ENCODE measurements at regions of chr16 and their contacts with region 1.

Region 1: GRCh38 chr16:70364399-70364798 is 17.7 kb downstream of the DDX19A start:
- DNase-seq: no peak
- H3K4me3 ChIP-seq: no peak overlapping the region
- H3K4me3 Mint-ChIP-seq: no peak overlapping the region
- H3K27ac Mint-ChIP-seq: no peak overlapping the region
- H3K4me1 ChIP-seq: no peaks in the 10 kb centered on the region
- H3K4me1 Mint-ChIP-seq: no peaks in the 10 kb centered on the region
- H3K27me3 ChIP-seq: no peaks in the 10 kb centered on the region
- H3K27me3 Mint-ChIP-seq: no peaks in the 10 kb centered on the region
- CTCF ChIP-seq: no peak

Region 2: GRCh38 chr16:70257391-70257790 is 107.0 kb before region 1 on chr16:
- CTCF ChIA-PET with region 1: no interaction called
- POLR2A ChIA-PET with region 1: no interaction called
- intact Hi-C with region 1: no loop called
- DNase-seq: no peak
- H3K4me3 ChIP-seq: no peak overlapping the region
- H3K4me3 Mint-ChIP-seq: no peak overlapping the region
- H3K27ac Mint-ChIP-seq: no peak overlapping the region
- H3K4me1 ChIP-seq: no peaks in the 10 kb centered on the region
- H3K4me1 Mint-ChIP-seq: no peaks in the 10 kb centered on the region
- H3K27me3 ChIP-seq: no peaks in the 10 kb centered on the region
- H3K27me3 Mint-ChIP-seq: no peaks in the 10 kb centered on the region
- CTCF ChIP-seq: no peak

Region 3: GRCh38 chr16:70470927-70471341 is 106.5 kb after region 1 on chr16:
- CTCF ChIA-PET with region 1: interaction called, 13 read pairs
- POLR2A ChIA-PET with region 1: no interaction called
- intact Hi-C with region 1: no loop called
- DNase-seq: peak; percentile 71 to 80
- H3K4me3 ChIP-seq: no peak overlapping the region
- H3K4me3 Mint-ChIP-seq: no peak overlapping the region
- H3K27ac Mint-ChIP-seq: peak overlapping the region; percentile 36
- H3K4me1 ChIP-seq: peaks cover 8% of the 10 kb centered on the region; the same call in 1 of the 2 replicates
- H3K4me1 Mint-ChIP-seq: peaks cover 7% of the 10 kb centered on the region
- H3K27me3 ChIP-seq: no peaks in the 10 kb centered on the region
- H3K27me3 Mint-ChIP-seq: no peaks in the 10 kb centered on the region
- CTCF ChIP-seq: peak; percentile 82 to 86

Region 4: DNA sequence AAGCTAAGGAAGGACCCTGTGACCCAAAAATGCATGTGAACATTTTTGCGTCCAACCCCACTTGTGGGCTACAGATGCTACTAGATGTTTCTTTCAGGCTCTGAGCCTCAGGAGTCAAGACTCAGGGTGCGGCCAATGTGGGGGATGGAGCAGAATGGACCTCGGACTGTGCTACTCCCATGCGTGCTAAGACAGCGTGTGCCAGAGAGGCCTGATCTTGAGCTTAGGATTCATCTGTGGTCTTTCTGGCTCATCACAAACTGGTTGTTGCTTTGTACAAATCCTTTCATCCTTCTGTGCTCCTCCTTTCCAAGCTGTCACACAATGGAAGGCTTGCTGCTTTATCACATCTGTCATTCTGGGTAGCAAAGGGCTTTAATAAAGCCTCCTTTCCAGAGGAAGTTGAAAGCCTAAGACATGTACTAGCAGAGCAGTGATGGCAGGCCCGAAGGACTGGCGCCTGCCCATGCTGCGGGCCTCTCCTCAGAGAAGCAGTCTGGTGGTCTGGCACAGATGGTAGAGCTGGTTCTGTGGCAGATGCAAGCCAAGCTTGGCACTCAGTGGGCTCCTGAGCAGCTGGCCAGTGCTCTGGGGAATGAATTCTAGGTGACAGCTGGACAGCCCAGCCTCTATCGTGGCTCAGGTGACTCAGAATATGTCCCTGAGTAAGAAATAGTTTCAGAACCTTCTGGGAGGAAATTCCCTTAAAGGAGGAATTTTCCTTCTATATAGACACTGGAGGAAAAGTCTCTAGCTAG is 131.2 kb after region 1 on chr16:
- CTCF ChIA-PET with region 1: no interaction called
- POLR2A ChIA-PET with region 1: no interaction called
- intact Hi-C with region 1: no loop called
- DNase-seq: no peak
- H3K4me3 ChIP-seq: no peak overlapping the region
- H3K4me3 Mint-ChIP-seq: no peak overlapping the region
- H3K27ac Mint-ChIP-seq: no peak overlapping the region
- H3K4me1 ChIP-seq: no peaks in the 10 kb centered on the region
- H3K4me1 Mint-ChIP-seq: no peaks in the 10 kb centered on the region
- H3K27me3 ChIP-seq: no peaks in the 10 kb centered on the region
- H3K27me3 Mint-ChIP-seq: no peaks in the 10 kb centered on the region
- CTCF ChIP-seq: no peak